ENCODE measurements at regions of chr2 and their contacts with region 1.

Region 1: DNA sequence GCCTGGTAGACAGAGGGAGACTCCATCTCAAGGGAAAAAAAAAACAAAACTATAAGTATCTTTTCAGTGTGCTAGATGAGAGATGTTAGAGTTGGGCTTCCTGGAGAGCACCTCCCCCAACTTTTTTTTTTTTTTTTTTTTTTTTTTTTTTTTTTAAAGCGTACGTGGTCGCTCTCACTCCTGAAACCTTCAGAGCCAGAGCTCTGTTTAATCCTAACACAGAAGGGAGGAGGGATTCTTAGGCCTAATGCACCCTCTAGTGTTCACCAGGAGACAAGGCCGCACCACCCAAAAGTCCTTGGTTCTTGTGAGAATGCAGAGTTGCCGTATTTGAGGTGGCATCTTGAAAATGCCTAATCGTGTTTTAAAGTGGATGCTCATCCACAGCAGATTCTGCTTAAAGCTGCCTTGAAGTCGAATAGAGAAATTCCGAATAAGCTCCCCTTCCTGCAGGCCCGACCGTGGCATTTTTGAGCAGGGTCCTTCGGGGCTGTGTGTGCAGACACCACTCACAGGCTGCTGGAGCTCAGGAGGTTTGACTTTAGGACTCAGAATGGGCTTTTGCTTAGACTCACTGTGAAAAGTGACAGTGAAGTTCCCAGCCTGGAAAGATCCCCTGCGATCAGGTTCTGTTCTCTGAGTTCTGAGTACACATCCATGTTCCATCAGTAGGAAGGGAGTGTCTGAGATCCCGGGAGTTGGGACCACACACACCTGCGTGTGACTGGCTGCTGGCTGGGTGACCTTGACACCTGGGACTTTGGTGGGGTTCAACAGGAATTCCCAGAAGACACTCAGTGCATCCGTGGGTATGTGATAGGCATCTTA is 252.6 kb downstream of the AGAP1 start:
- DNase-seq: no peak
- H3K4me3 ChIP-seq: no peak overlapping the region
- H3K27ac ChIP-seq: peak overlapping the region; percentile 60 to 76 (median 68)
- H3K4me1 ChIP-seq: peaks cover 14 to 52% (median 46%) of the 10 kb centered on the region in 4 donors
- H3K27me3 ChIP-seq: no peaks in the 10 kb centered on the region
- CTCF ChIP-seq: peak; percentile 82 to 87 (median 82)
- EP300 ChIP-seq: no peak
- POLR2A ChIP-seq: no peak

Region 2: GRCh38 chr2:235135990-235136561 is 610.4 kb before region 1 on chr2:
- intact Hi-C with region 1: loop called (anchors 2 kb)
- DNase-seq: no peak
- H3K4me3 ChIP-seq: no peak overlapping the region
- H3K27ac ChIP-seq: no peak overlapping the region
- H3K4me1 ChIP-seq: peaks cover 0 to 5% (median 0%) of the 10 kb centered on the region in 4 donors
- H3K27me3 ChIP-seq: peaks cover 0 to 9% (median 0%) of the 10 kb centered on the region in 4 donors
- CTCF ChIP-seq: peak; percentile 68 to 79 (median 72)
- EP300 ChIP-seq: no peak
- POLR2A ChIP-seq: no peak

Region 3: GRCh38 chr2:235570256-235570655 is 176.2 kb before region 1 on chr2:
- intact Hi-C with region 1: no loop called
- DNase-seq: no peak
- H3K4me3 ChIP-seq: no peak overlapping the region
- H3K27ac ChIP-seq: no peak overlapping the region
- H3K4me1 ChIP-seq: peaks cover 4 to 20% (median 14%) of the 10 kb centered on the region in 4 donors
- H3K27me3 ChIP-seq: no peaks in the 10 kb centered on the region
- CTCF ChIP-seq: no peak
- EP300 ChIP-seq: no peak
- POLR2A ChIP-seq: no peak

Region 4: DNA sequence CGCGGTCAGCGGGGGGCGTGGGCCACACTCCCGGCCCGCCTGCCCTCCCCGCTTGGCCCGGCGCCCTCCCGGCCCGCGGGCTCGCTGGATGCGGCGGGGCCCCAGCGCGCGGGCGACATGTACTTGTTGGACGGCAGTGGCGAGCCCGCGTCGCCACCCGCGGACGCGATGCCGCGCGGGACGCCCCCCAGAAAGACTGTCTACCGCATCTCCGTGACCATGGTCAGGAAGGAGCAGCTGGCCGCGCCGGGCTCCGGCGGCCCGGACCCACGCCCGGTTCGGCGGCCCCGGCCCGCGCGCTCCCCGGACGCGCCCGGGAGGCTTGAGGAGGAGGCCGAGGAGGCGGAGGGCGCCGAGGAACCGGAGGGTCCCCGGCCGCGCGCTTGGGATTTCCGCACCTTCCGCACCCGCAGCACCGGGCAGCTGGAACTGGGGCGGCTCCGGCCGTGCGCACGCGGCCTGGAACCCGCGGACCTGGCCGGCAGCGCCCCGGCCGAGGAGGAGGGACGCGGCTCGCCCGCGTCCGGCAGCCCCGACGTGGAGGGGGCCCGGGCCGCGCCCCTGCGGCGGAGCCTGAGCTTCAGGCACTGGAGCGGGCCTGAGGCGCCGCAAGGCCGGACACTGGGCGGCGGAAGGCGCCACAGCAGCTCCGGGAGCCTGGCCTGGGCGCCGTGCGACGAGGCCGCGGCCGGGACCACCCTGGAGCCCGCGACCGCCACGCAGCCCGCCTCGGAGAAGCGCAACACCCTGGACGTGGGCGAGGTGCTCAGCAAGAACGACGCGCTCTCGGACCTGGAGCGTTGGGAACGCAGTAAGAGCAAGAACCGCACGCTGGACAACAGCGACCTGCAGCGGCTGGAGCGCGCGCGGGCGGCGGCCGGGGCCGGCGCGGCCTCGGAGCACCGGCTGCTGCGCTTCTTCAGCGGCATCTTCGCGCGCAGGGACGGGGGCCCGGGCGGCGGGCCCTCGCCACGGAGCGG is 76.2 kb before region 1 on chr2:
- intact Hi-C with region 1: loop called (anchors 2 kb)
- DNase-seq: no peak
- H3K4me3 ChIP-seq: peak overlapping the region; percentile 67 to 83 (median 78)
- H3K27ac ChIP-seq: peak overlapping the region; percentile 81 to 86 (median 82)
- H3K4me1 ChIP-seq: peaks cover 22 to 74% (median 58%) of the 10 kb centered on the region in 4 donors
- H3K27me3 ChIP-seq: peaks cover 0 to 5% (median 0%) of the 10 kb centered on the region in 4 donors
- CTCF ChIP-seq: peak; percentile 73 to 88 (median 77)
- EP300 ChIP-seq: no peak
- POLR2A ChIP-seq: no peak

Region 5: GRCh38 chr2:236008006-236008405 is 261.5 kb after region 1 on chr2:
- intact Hi-C with region 1: no loop called
- DNase-seq: no peak
- H3K4me3 ChIP-seq: no peak overlapping the region
- H3K27ac ChIP-seq: no peak overlapping the region
- H3K4me1 ChIP-seq: no peaks in the 10 kb centered on the region
- H3K27me3 ChIP-seq: no peaks in the 10 kb centered on the region
- CTCF ChIP-seq: no peak
- EP300 ChIP-seq: no peak
- POLR2A ChIP-seq: no peak

Measured in esophagus muscularis mucosa (tissue), 4 donors.